ENCODE measurements at regions of chr21 and their contacts with region 1.

Region 1: GRCh38 chr21:37531431-37531932 is 164.9 kb downstream of the DYRK1A start:
- DNase-seq: peak; percentile 80
- ATAC-seq: peak; percentile 90

Region 2: DNA sequence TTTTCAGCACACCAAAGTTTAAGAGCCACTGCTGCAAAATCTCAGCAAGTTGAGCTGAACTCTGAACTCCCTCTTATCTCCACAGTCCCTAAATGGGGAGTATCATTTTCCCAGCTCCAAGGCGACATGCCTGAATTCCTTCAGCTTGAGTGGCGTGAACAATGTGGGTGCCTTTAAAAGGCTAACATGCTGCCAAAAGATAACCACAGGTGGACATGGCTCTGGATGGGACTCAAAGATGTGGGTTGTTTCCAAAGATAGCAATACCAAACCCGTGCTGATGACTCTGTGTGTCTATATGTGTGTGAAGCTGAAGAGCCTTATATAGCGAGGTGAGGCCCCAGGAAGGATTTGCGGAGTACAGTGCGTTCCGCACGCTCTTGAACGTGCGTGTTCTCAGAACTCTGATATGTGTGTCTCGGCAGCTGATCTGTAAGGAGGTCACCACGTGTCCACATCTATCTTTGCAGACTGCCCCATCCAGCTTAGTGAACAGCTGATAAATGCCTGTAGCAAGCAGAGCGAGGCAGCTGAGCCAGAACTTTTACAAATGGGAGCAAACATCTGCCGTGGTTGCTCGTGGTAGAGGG is 24.3 kb after region 1 on chr21:
- intact Hi-C with region 1: loop called (anchors 1 kb)
- DNase-seq: no peak
- ATAC-seq: peak; percentile 73